Caco-2 (cell line): ENCODE measurements at regions of chr22 and their contacts with region 1.

Region 1: DNA sequence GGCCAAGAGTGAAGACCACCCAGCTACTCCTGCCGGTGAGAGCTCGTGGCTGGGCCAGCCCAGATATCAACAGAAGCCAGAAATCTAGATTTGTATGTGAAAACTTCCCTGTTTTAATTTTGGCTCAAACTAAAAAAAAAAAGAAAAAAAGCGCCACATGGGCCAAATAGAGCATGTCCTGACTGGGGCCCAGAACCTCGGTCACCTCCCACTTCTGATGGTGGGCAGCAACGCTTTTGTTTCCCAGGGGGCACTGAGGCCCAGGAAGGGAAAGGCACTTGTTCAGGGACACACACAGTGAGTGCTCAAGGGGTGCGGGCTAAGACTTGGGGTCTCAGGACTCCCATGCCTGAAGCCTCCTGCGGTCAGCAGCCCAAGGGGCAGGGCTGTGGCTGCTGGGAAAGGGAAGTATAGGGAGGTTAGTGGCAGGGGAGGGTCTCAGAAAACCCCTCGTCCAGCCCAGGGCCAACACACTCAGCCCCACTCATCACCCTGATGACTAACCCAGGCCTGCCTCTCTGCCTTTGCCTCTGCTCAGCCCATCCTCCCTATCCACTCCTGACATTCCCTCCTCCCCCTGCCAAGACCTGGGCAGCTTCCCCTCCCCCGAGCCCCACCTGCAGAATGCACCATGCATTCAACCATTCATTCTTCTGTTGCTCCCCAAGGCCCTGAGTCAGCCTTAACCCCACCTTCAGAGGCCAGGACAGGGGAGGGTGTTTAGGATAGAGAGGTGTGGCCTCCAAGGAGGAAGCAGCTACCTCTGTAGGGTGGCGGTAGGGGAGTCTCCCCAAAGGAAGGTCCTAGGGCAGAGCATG is 30.0 kb upstream of the TCF20 start:
- DNase-seq: peak; percentile 55 to 79
- H3K4me3 ChIP-seq: no peak overlapping the region
- H3K4me3 Mint-ChIP-seq: peak overlapping the region; percentile 58
- H3K27ac Mint-ChIP-seq: peak overlapping the region; percentile 92
- H3K4me1 ChIP-seq: peaks cover 79% of the 10 kb centered on the region
- H3K4me1 Mint-ChIP-seq: peaks cover 63% of the 10 kb centered on the region
- H3K27me3 ChIP-seq: no peaks in the 10 kb centered on the region
- H3K27me3 Mint-ChIP-seq: no peaks in the 10 kb centered on the region
- CTCF ChIP-seq: no peak

Region 2: DNA sequence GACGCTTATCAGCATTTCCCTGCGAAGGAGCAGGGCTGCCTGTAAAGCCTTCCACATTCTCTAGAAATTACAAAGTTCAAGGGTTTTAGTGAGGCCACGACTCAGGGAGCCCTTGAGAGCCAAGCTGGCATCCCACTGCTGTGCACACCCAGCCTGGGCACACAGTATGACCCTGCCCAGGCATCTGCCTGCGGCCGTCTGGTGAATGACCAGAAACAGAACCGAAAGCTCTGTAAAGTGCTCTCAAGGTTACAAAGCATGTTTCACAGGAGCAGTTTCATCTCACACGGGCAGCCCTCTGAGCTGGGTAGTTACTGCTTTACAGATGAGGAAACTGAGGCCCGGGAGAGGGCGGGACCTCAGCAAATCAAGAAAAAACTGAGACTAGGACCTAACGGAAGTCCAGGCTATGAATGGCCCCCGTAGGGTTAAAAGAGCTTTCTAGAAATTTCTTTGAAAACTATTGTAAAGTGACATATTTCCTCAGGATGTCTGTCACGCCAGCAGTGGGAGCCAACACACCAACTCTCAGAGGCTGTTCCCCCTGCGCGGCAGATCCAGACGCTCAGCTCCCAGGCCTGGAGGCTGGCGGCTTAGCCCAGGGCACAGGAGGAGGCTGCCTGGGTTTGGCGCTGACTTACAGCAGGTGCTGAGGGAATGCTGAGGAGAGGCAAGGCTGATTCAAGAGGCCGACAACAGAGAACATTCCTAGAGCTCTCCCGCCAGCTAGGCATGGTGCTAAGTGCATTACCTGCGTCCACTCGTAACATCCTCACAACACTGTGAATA is 22.3 kb before region 1 on chr22:
- CTCF ChIA-PET with region 1: interaction called, 10 read pairs
- POLR2A ChIA-PET with region 1: no interaction called
- intact Hi-C with region 1: loop called (anchors 1 kb)
- DNase-seq: peak; percentile 75 to 78
- H3K4me3 ChIP-seq: no peak overlapping the region
- H3K4me3 Mint-ChIP-seq: no peak overlapping the region
- H3K27ac Mint-ChIP-seq: peak overlapping the region; percentile 55
- H3K4me1 ChIP-seq: peaks cover 52% of the 10 kb centered on the region
- H3K4me1 Mint-ChIP-seq: peaks cover 38% of the 10 kb centered on the region
- H3K27me3 ChIP-seq: no peaks in the 10 kb centered on the region
- H3K27me3 Mint-ChIP-seq: no peaks in the 10 kb centered on the region
- CTCF ChIP-seq: peak in 1 of 2 experiments; percentile 62

Region 3: GRCh38 chr22:42283278-42284201 is 16.9 kb before region 1 on chr22:
- CTCF ChIA-PET with region 1: interaction called, 10 read pairs
- POLR2A ChIA-PET with region 1: interaction called, 3 read pairs
- intact Hi-C with region 1: loop called (anchors 1 kb)
- DNase-seq: peak; percentile 86 to 88
- H3K4me3 ChIP-seq: peak overlapping the region; percentile 41
- H3K4me3 Mint-ChIP-seq: peak overlapping the region; percentile 42
- H3K27ac Mint-ChIP-seq: peak overlapping the region; percentile 22
- H3K4me1 ChIP-seq: peaks cover 78% of the 10 kb centered on the region
- H3K4me1 Mint-ChIP-seq: peaks cover 31% of the 10 kb centered on the region
- H3K27me3 ChIP-seq: no peaks in the 10 kb centered on the region
- H3K27me3 Mint-ChIP-seq: no peaks in the 10 kb centered on the region
- CTCF ChIP-seq: no peak

Region 4: DNA sequence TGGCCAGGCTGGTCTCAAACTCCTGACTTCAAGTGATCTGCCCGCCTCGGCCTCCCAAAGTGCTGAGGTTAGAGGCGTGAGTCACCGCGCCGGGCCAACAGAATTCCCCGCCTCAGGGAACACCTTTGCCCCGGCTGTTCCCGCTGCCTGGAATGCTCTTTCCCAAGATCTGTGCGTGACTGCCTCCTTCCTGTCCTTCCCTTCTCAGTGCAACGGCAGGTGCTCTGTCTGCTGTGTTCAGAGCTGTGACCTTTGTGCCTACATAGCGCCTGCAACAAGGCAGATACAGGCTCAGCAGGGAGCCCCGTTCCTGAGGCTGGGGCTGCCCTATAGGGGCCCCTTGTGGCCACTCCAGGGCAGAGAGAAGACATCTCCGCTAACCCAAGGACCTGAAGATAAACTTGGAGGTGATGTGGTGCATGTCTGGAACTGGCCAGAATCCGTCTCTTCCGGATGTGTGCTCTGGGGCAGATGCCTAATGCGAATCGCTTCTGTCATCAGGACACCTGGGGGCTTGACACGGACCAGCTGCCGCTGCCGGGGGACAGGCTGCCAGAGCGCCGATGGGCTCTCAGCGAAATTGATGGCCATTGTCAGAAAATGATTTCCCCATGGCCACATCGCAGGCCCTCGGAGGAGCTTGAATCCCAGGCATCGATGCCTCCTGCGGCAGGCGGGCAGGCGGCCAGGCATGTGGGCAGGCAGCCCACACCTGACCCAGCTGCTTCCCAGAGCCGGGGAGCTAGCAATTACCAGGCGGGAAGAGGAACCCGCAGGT is 13.5 kb after region 1 on chr22:
- CTCF ChIA-PET with region 1: interaction called, 7 read pairs
- POLR2A ChIA-PET with region 1: interaction called, 4 read pairs
- intact Hi-C with region 1: loop called (anchors 1 kb)
- DNase-seq: peak; percentile 94 to 98
- H3K4me3 ChIP-seq: no peak overlapping the region
- H3K4me3 Mint-ChIP-seq: peak overlapping the region; percentile 52
- H3K27ac Mint-ChIP-seq: peak overlapping the region; percentile 95
- H3K4me1 ChIP-seq: peaks cover 61% of the 10 kb centered on the region
- H3K4me1 Mint-ChIP-seq: peaks cover 42% of the 10 kb centered on the region
- H3K27me3 ChIP-seq: no peaks in the 10 kb centered on the region
- H3K27me3 Mint-ChIP-seq: no peaks in the 10 kb centered on the region
- CTCF ChIP-seq: peak; percentile 67 to 91

Region 5: DNA sequence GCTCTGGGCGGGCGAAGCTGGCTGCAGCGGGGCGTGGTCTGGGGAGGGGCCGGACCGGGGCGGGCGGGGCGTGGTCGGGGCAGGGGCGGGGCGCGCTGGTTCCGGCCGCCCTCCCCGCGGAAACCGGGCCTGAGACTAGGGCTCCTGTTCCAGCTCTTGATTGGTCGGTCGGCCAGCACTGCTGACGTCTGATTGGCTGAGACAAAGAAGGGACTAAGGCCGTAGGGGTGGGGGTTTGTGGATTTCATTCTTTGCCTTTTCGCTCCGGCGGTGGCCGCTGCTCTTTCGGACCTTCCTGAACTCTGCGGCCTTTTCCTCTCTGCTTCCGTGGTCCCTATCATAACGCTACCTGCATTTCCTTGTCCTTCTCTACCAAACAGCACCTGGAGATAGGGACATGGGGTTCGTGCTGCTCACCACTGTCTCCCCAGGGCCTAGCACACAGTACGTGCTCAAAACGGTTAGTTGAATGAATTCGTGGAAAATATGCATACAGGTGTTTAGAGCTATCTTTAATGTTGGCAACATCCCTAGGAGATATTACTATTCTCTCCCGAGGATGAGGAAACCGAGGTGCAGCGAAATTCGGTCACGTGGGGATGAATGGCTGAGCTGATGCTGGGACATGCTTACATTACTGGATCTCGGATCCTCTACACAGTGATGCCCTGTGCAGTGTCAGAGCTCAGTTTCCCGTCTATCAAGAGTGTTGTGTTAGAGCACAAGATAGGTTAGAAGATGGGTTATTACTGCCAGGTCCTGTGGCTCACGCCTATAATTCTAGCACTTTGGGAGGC is 69.0 kb after region 1 on chr22:
- CTCF ChIA-PET with region 1: interaction called, 3 read pairs
- POLR2A ChIA-PET with region 1: interaction called, 11 read pairs
- intact Hi-C with region 1: no loop called
- DNase-seq: peak; percentile 94 to 96
- H3K4me3 ChIP-seq: peak overlapping the region; percentile 93
- H3K4me3 Mint-ChIP-seq: peak overlapping the region; percentile 97
- H3K27ac Mint-ChIP-seq: peak overlapping the region; percentile 76
- H3K4me1 ChIP-seq: no peaks in the 10 kb centered on the region; the same call in 1 of the 2 replicates
- H3K4me1 Mint-ChIP-seq: peaks cover 16% of the 10 kb centered on the region
- H3K27me3 ChIP-seq: no peaks in the 10 kb centered on the region
- H3K27me3 Mint-ChIP-seq: no peaks in the 10 kb centered on the region
- CTCF ChIP-seq: no peak